Activated CD8-positive, alpha-beta T cell treated with anti-CD3 and anti-CD28 coated beads, Interleukin-2, amount 10 ng/mL, durations not matched to agents 7 days and 5 days (primary cell): ENCODE measurements at regions of chr2 and their contacts with region 1.

Region 1: DNA sequence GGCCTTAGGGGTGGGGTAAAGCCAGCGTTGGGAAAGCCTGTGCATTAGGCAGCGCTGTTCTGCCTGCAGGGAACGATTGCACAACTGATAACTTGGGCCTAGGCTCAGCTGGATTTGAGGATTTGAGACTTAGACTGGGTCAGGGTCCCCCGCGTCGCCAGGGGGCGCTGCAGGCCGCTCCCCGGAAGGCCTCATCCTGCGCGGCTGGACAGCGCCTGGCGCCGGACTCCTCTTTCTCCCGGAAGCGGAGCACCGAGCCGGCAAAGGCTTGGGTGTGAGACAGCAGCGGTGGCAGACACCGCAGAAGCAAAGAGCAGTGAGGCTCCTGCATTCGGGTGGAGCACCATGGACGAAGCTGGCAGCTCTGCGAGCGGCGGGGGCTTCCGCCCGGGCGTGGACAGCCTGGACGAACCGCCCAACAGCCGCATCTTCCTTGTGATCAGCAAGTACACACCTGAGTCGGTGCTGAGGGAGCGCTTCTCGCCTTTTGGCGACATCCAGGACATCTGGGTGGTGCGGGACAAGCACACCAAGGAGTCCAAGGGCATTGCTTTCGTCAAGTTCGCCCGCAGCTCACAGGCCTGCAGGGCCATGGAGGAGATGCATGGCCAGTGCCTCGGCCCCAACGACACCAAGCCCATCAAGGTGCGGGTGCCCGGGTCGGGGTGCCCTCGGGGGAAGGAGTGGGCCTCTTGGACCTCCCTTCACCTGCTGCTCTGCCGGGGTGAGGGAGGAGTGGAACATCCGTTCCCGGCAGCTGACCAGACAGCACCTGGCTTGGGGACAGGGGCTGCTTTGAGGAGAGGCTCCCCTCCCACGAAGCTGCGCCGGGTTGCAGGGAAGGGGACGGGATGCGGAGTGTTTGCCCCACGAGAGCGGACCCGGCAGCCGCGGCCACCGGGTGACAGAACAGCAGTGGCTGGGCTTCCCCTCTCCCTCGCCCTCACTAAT is at the start of gene RBM45:
- DNase-seq: peak; percentile 89
- ATAC-seq: peak; percentile 95
- H3K4me3 Mint-ChIP-seq: peak within 1 kb of the TSS; percentile 95
- H3K27ac Mint-ChIP-seq: peak within 1 kb of the TSS; percentile 91
- H3K4me1 Mint-ChIP-seq: peaks cover 31% of the 10 kb centered on the region
- H3K27me3 Mint-ChIP-seq: no peaks in the 10 kb centered on the region
- total RNA-seq, gene RBM45: 16.9 to 18.0 TPM

Region 2: DNA sequence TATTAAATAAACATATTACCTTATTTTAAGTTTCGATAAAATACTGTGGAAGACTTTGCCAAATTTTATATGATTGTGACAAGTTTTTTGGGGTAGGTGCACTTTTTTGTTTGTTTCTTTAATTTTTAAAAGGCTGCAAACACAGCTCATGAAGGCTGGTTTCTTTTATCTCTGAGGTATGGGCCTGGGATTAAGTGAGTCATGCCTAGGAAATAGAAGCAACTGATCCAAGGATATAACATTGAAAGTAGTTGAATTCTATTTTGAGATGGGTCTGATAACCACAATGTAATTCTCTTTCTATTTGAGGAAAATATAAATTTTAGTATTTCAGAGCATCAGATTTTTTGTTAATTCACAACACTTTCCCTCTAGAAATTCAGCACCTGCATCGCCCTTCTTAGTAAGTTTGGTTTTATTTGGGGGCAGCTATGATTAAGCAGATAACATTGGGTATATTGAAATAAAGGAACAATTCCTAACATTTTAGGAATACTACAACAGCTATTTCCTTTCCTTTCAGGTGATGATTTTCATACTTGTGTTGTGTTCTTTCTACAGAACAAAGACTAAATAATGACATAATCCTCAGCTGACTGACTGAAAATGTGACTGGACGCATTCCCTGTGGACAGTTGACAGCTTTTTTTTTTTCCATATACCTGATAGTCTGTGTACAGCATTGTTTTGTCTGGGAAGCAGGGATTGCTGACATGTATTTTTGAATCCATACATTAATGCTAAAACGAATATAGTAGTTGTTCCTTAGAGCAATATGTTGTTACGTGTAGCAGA is 16.6 kb after region 1 on chr2:
- CTCF ChIA-PET with region 1: interaction called, 37 read pairs
- POLR2A ChIA-PET with region 1: no interaction called
- DNase-seq: no peak
- ATAC-seq: no peak
- H3K4me3 Mint-ChIP-seq: no peak overlapping the region
- H3K27ac Mint-ChIP-seq: no peak overlapping the region
- H3K4me1 Mint-ChIP-seq: no peaks in the 10 kb centered on the region
- H3K27me3 Mint-ChIP-seq: no peaks in the 10 kb centered on the region

Region 3: GRCh38 chr2:178280244-178280852 is 167.9 kb after region 1 on chr2:
- CTCF ChIA-PET with region 1: interaction called, 10 read pairs
- POLR2A ChIA-PET with region 1: no interaction called
- DNase-seq: peak; percentile 57
- ATAC-seq: peak; percentile 55
- H3K4me3 Mint-ChIP-seq: no peak overlapping the region
- H3K27ac Mint-ChIP-seq: no peak overlapping the region
- H3K4me1 Mint-ChIP-seq: peaks cover 5% of the 10 kb centered on the region
- H3K27me3 Mint-ChIP-seq: peaks cover 15% of the 10 kb centered on the region

Region 4: DNA sequence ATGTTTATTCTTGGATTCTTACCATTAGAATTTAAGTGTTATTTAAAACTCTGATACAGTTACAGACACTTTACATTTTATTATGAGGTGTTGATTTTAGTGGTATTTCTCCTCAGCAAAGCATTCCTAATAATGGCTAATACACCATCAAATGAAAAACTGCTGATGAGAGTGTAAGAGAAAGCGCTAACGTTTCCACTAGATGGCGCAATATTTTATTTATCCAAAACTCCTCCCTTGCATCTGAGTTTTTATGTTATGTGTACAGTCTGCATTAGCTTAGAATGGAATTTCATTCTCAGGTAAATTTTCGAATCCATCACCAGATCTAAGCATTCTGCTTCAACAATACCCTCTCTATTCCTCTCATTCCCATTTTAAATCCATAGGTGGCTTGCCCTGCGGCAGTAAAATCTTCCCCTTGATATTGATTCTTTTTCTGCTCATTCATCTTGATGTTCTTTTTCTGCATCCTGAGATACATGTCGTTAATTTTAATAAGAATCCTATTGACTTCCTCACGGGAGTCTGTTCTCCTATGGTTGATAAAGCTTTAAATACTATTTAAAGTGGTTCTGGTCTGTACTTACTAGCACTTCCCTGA is 284.6 kb after region 1 on chr2:
- CTCF ChIA-PET with region 1: interaction called, 25 read pairs
- POLR2A ChIA-PET with region 1: no interaction called
- DNase-seq: no peak
- ATAC-seq: peak; percentile 79
- H3K4me3 Mint-ChIP-seq: no peak overlapping the region
- H3K27ac Mint-ChIP-seq: no peak overlapping the region
- H3K4me1 Mint-ChIP-seq: peaks cover 4% of the 10 kb centered on the region
- H3K27me3 Mint-ChIP-seq: peaks cover 34% of the 10 kb centered on the region

Region 5: DNA sequence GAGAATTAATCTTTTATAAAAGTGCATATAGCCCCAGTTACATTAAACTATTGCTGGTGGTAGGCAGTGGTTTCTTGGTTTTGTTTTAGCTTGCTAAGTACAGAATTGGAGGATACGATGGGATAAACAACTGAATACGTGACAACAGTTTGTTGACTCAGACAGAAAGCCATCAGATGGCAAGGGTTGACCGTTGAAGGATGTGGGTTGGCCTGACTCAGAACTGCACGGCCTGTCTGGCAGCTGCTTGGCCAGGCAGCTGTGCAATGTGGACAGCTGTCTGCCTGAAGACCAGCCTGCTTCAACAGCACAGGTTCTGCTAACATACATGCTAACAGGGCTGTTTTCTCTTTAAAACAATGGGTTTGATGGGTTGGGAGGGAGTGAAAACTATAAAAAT is 291.9 kb after region 1 on chr2:
- CTCF ChIA-PET with region 1: interaction called, 25 read pairs
- POLR2A ChIA-PET with region 1: no interaction called
- DNase-seq: peak; percentile 44
- ATAC-seq: peak; percentile 84
- H3K4me3 Mint-ChIP-seq: peak overlapping the region; percentile 34
- H3K27ac Mint-ChIP-seq: peak overlapping the region; percentile 84
- H3K4me1 Mint-ChIP-seq: peaks cover 18% of the 10 kb centered on the region
- H3K27me3 Mint-ChIP-seq: peaks cover 11% of the 10 kb centered on the region